Activated B cell treated with CpG ODN at 0.5 μM for 24 hours (primary cell): ENCODE measurements at regions of chr19 and their contacts with region 1.

Region 1: GRCh38 chr19:36054119-36054732 is at the start of gene THAP8:
- DNase-seq: peak; percentile 98
- ATAC-seq: peak; percentile 83
- H3K4me3 Mint-ChIP-seq: peak within 1 kb of the TSS; percentile 93
- H3K27ac Mint-ChIP-seq: peak within 1 kb of the TSS; percentile 93
- H3K4me1 Mint-ChIP-seq: peaks cover 18% of the 10 kb centered on the region
- H3K27me3 Mint-ChIP-seq: no peaks in the 10 kb centered on the region
- CTCF ChIP-seq: no peak
- total RNA-seq, gene THAP8: 2.3 and 2.4 TPM in 2 replicates

Region 2: GRCh38 chr19:35648017-35648961 is 405.9 kb before region 1 on chr19 and contains the start of gene COX6B1:
- CTCF ChIA-PET with region 1: no interaction called
- POLR2A ChIA-PET with region 1: no interaction called
- intact Hi-C with region 1: loop called (anchors 10 kb)
- DNase-seq: peak; percentile 72
- ATAC-seq: peak; percentile 66
- H3K4me3 Mint-ChIP-seq: peak within 1 kb of the TSS; percentile 96
- H3K27ac Mint-ChIP-seq: peak within 1 kb of the TSS; percentile 87
- H3K4me1 Mint-ChIP-seq: peaks cover 37% of the 10 kb centered on the region
- H3K27me3 Mint-ChIP-seq: no peaks in the 10 kb centered on the region
- CTCF ChIP-seq: no peak
- total RNA-seq, gene COX6B1: 334 and 401 TPM in 2 replicates

Region 3: GRCh38 chr19:35748106-35749020 is 305.9 kb before region 1 on chr19 and contains the start of gene LIN37:
- CTCF ChIA-PET with region 1: no interaction called
- POLR2A ChIA-PET with region 1: interaction called, 7 read pairs
- intact Hi-C with region 1: loop called (anchors 2 kb)
- DNase-seq: peak; percentile 91
- ATAC-seq: peak; percentile 73
- H3K4me3 Mint-ChIP-seq: peak within 1 kb of the TSS; percentile 98
- H3K27ac Mint-ChIP-seq: peak within 1 kb of the TSS; percentile 96
- H3K4me1 Mint-ChIP-seq: peaks cover 48% of the 10 kb centered on the region
- H3K27me3 Mint-ChIP-seq: no peaks in the 10 kb centered on the region
- CTCF ChIP-seq: no peak
- total RNA-seq, gene LIN37: 12.2 and 14.3 TPM in 2 replicates

Region 4: GRCh38 chr19:35828692-35829301 is 225.4 kb before region 1 on chr19:
- CTCF ChIA-PET with region 1: no interaction called
- POLR2A ChIA-PET with region 1: no interaction called
- intact Hi-C with region 1: no loop called
- DNase-seq: no peak
- ATAC-seq: peak; percentile 37
- H3K4me3 Mint-ChIP-seq: no peak overlapping the region
- H3K27ac Mint-ChIP-seq: no peak overlapping the region
- H3K4me1 Mint-ChIP-seq: no peaks in the 10 kb centered on the region
- H3K27me3 Mint-ChIP-seq: peaks cover 29% of the 10 kb centered on the region
- CTCF ChIP-seq: no peak

Region 5: GRCh38 chr19:35931161-35931873 is 122.9 kb before region 1 on chr19:
- CTCF ChIA-PET with region 1: no interaction called
- POLR2A ChIA-PET with region 1: interaction called, 4 read pairs
- intact Hi-C with region 1: loop called (anchors 1 kb)
- DNase-seq: peak; percentile 99
- ATAC-seq: peak; percentile 94
- H3K4me3 Mint-ChIP-seq: peak overlapping the region; percentile 72
- H3K27ac Mint-ChIP-seq: peak overlapping the region; percentile 87
- H3K4me1 Mint-ChIP-seq: peaks cover 48% of the 10 kb centered on the region
- H3K27me3 Mint-ChIP-seq: peaks cover 4% of the 10 kb centered on the region
- CTCF ChIP-seq: no peak

Region 6: GRCh38 chr19:35995048-35995993 is 58.9 kb before region 1 on chr19 and contains the start of gene SDHAF1:
- CTCF ChIA-PET with region 1: interaction called, 3 read pairs
- POLR2A ChIA-PET with region 1: interaction called, 5 read pairs
- intact Hi-C with region 1: loop called (anchors 1 kb)
- DNase-seq: peak; percentile 88
- ATAC-seq: peak; percentile 94
- H3K4me3 Mint-ChIP-seq: peak within 1 kb of the TSS; percentile 94
- H3K27ac Mint-ChIP-seq: peak within 1 kb of the TSS; percentile 94
- H3K4me1 Mint-ChIP-seq: peaks cover 33% of the 10 kb centered on the region
- H3K27me3 Mint-ChIP-seq: no peaks in the 10 kb centered on the region
- CTCF ChIP-seq: no peak
- total RNA-seq, gene SDHAF1: 20.3 and 21.9 TPM in 2 replicates

Region 7: GRCh38 chr19:36032251-36033104 is 21.7 kb before region 1 on chr19 and contains the start of gene CLIP3:
- CTCF ChIA-PET with region 1: no interaction called
- POLR2A ChIA-PET with region 1: no interaction called
- intact Hi-C with region 1: no loop called
- DNase-seq: no peak
- ATAC-seq: peak; percentile 10
- H3K4me3 Mint-ChIP-seq: peak within 1 kb of the TSS; percentile 28
- H3K27ac Mint-ChIP-seq: no peak within 1 kb of the TSS
- H3K4me1 Mint-ChIP-seq: peaks cover 12% of the 10 kb centered on the region
- H3K27me3 Mint-ChIP-seq: peaks cover 1% of the 10 kb centered on the region
- CTCF ChIP-seq: no peak
- total RNA-seq, gene CLIP3: 0.20 and 0.62 TPM in 2 replicates

Region 8: DNA sequence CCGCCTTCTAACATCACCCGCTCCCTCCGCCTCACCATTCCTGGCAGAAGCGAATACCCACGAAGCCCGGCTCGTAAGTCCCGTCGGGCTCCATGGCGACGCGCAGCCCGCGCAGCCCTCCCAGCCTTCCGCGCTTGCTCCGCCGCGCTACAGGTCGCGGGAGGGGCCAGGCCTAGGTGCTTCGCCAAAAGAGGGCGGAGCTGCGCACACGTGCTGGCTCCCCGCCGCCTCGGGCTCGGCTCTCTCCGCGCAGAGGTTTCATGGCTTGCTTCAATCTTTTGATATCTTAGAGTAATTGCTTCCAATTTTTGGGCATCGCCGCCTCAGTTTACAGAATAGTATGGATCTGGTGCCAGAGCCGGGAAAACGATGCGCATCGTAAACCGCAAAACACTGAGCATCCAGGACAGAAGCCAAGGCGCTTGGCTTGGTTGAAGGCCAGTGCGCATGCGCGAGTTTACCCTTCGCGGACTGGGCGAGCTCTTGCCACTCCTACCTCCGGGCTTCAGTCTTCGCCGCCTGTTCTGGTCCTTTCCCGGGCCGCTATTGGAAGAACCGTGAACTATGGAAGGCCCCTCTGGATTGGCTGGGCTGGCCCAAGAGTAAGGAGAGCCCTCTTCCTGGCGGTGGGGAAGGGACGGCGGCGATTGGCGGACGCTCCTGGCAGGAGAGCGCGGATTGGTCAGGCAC is 60.7 kb after region 1 on chr19 and contains the start of gene POLR2I:
- CTCF ChIA-PET with region 1: no interaction called
- POLR2A ChIA-PET with region 1: interaction called, 26 read pairs
- intact Hi-C with region 1: loop called (anchors 1 kb)
- DNase-seq: peak; percentile 93
- ATAC-seq: peak; percentile 86
- H3K4me3 Mint-ChIP-seq: peak within 1 kb of the TSS; percentile 92
- H3K27ac Mint-ChIP-seq: peak within 1 kb of the TSS; percentile 97
- H3K4me1 Mint-ChIP-seq: peaks cover 43% of the 10 kb centered on the region
- H3K27me3 Mint-ChIP-seq: no peaks in the 10 kb centered on the region
- CTCF ChIP-seq: no peak
- total RNA-seq, gene POLR2I: 46.6 and 51.6 TPM in 2 replicates

Region 9: GRCh38 chr19:36196249-36196648 is 142.0 kb after region 1 on chr19:
- CTCF ChIA-PET with region 1: no interaction called
- POLR2A ChIA-PET with region 1: no interaction called
- intact Hi-C with region 1: no loop called
- DNase-seq: no peak
- ATAC-seq: no peak
- H3K4me3 Mint-ChIP-seq: no peak overlapping the region
- H3K27ac Mint-ChIP-seq: no peak overlapping the region
- H3K4me1 Mint-ChIP-seq: peaks cover 6% of the 10 kb centered on the region
- H3K27me3 Mint-ChIP-seq: no peaks in the 10 kb centered on the region
- CTCF ChIP-seq: no peak

Region 10: DNA sequence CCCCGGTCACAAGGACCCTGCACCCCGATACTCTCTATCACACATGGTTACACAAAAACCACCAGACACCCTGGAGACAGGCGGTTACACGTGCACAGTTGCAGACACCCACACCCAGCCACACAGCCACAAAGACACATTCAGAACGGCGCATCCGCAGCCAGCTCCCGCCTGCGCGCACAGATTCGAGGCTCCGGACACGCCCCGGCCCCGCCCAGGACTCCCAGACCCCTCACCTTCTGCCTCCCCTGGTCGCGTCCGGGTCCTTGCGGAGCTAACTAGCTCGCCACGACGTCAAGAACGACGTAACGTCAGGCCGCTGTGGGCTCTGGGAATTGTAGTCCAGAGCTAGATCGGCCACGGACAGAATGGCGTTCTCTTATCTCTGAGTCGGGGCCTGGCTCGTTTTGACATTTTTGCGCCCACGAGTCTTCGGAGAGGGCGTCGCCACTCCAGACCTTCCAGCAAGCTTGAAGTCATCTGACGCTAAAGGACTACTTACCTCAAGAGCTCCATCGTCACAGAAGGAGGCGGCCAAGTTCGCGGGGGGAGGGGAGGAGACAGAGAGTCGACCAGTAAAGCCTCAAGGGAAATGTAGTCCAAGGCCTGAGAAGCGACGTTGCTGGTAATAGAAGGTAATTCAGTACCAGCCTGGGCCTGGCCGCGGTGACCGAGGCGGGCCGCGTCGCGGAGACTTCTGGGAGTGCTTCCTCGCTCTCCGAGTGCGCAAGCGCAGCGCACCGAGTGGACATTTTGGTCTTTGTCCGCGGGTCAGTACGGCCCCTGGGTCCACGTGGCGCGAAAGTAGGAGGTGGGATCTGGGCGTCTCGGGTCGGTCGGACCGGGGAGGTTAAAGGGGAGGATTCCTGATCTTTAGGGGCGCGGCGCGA is 160.4 kb after region 1 on chr19 and contains the starts of genes ZNF146 and ZNF565:
- CTCF ChIA-PET with region 1: no interaction called
- POLR2A ChIA-PET with region 1: interaction called, 12 read pairs
- intact Hi-C with region 1: loop called (anchors 1 kb)
- DNase-seq: peak; percentile 90
- ATAC-seq: peak; percentile 90
- H3K4me3 Mint-ChIP-seq: no peak within 1 kb of the TSS
- H3K27ac Mint-ChIP-seq: no peak within 1 kb of the TSS
- H3K4me1 Mint-ChIP-seq: peaks cover 29% of the 10 kb centered on the region
- H3K27me3 Mint-ChIP-seq: no peaks in the 10 kb centered on the region
- CTCF ChIP-seq: no peak
- total RNA-seq, gene ZNF146: 57.8 and 63.2 TPM in 2 replicates
- total RNA-seq, gene ZNF565: 2.3 and 3.2 TPM in 2 replicates